Activated naive CD4-positive, alpha-beta T cell treated with anti-CD3 and anti-CD28 coated beads for 36 hours (primary cell): ENCODE measurements at regions of chr2 and their contacts with region 1.

Region 1: GRCh38 chr2:158456309-158457066 is at the starts of genes CCDC148 and PKP4:
- DNase-seq: peak; percentile 94
- H3K4me3 Mint-ChIP-seq: peak within 1 kb of the TSS; percentile 95
- H3K27ac Mint-ChIP-seq: peak within 1 kb of the TSS; percentile 79
- H3K4me1 Mint-ChIP-seq: peaks cover 24% of the 10 kb centered on the region
- H3K27me3 Mint-ChIP-seq: no peaks in the 10 kb centered on the region
- total RNA-seq, gene CCDC148: not detected
- total RNA-seq, gene PKP4: 52.9 to 57.0 TPM

Region 2: GRCh38 chr2:156538083-156538504 is 1918.4 kb before region 1 on chr2:
- CTCF ChIA-PET with region 1: no interaction called
- intact Hi-C with region 1: loop called (anchors 10 kb)
- DNase-seq: no peak
- H3K4me3 Mint-ChIP-seq: no peak overlapping the region
- H3K27ac Mint-ChIP-seq: no peak overlapping the region
- H3K4me1 Mint-ChIP-seq: peaks cover 39% of the 10 kb centered on the region
- H3K27me3 Mint-ChIP-seq: no peaks in the 10 kb centered on the region

Region 3: DNA sequence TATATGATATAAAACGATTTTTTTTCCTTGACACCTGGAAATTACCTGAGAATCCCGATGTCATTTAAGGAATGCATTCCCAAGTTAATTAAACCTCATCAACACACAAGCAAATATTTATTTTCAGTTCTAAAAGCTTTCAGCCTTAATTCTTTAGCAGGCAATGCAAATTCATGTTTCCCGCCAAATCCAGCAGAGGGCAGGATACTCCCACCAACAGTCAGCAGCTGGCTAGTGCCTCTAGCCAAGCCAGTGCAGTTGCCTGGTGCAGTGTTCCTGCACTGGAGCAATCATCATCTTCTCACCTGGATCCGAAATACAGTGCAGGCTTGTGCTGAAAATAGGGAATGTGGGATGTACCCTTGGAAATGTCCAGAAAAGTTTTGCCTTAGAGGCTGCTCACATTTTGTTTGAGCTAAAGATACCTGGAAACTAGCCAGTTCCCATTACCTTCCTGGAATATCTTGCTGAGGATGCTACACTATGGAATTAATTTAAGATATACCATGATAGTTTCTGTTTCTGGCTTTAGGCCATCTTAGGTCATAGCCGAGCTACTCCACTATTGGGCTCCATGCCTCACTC is 964.2 kb before region 1 on chr2:
- CTCF ChIA-PET with region 1: no interaction called
- intact Hi-C with region 1: loop called (anchors 5 kb)
- DNase-seq: peak; percentile 89
- H3K4me3 Mint-ChIP-seq: no peak overlapping the region
- H3K27ac Mint-ChIP-seq: no peak overlapping the region
- H3K4me1 Mint-ChIP-seq: peaks cover 62% of the 10 kb centered on the region
- H3K27me3 Mint-ChIP-seq: no peaks in the 10 kb centered on the region

Region 4: GRCh38 chr2:157876066-157876787 is 580.3 kb before region 1 on chr2 and contains the start of gene ACVR1:
- CTCF ChIA-PET with region 1: no interaction called
- intact Hi-C with region 1: loop called (anchors 2 kb)
- DNase-seq: peak; percentile 91
- H3K4me3 Mint-ChIP-seq: peak within 1 kb of the TSS; percentile 94
- H3K27ac Mint-ChIP-seq: peak within 1 kb of the TSS; percentile 88
- H3K4me1 Mint-ChIP-seq: peaks cover 51% of the 10 kb centered on the region
- H3K27me3 Mint-ChIP-seq: no peaks in the 10 kb centered on the region
- total RNA-seq, gene ACVR1: 19.0 to 20.8 TPM

Region 5: GRCh38 chr2:158191076-158191895 is 265.2 kb before region 1 on chr2:
- CTCF ChIA-PET with region 1: no interaction called
- intact Hi-C with region 1: loop called (anchors 1 kb)
- DNase-seq: peak; percentile 66
- H3K4me3 Mint-ChIP-seq: no peak overlapping the region
- H3K27ac Mint-ChIP-seq: peak overlapping the region; percentile 32
- H3K4me1 Mint-ChIP-seq: peaks cover 25% of the 10 kb centered on the region
- H3K27me3 Mint-ChIP-seq: peaks cover 29% of the 10 kb centered on the region

Region 6: GRCh38 chr2:158968396-158969161 is 512.1 kb after region 1 on chr2 and contains the start of gene TANC1:
- CTCF ChIA-PET with region 1: no interaction called
- intact Hi-C with region 1: loop called (anchors 5 kb)
- DNase-seq: peak; percentile 85
- H3K4me3 Mint-ChIP-seq: peak within 1 kb of the TSS; percentile 80
- H3K27ac Mint-ChIP-seq: no peak within 1 kb of the TSS
- H3K4me1 Mint-ChIP-seq: peaks cover 14% of the 10 kb centered on the region
- H3K27me3 Mint-ChIP-seq: peaks cover 50% of the 10 kb centered on the region
- total RNA-seq, gene TANC1: 2.0 to 2.3 TPM

Region 7: GRCh38 chr2:159895258-159896065 is 1439.0 kb after region 1 on chr2:
- CTCF ChIA-PET with region 1: no interaction called
- intact Hi-C with region 1: loop called (anchors 10 kb)
- DNase-seq: peak; percentile 66
- H3K4me3 Mint-ChIP-seq: no peak overlapping the region
- H3K27ac Mint-ChIP-seq: peak overlapping the region; percentile 84
- H3K4me1 Mint-ChIP-seq: peaks cover 91% of the 10 kb centered on the region
- H3K27me3 Mint-ChIP-seq: no peaks in the 10 kb centered on the region